IMR-90 (cell line): ENCODE measurements at regions of chr11 and their contacts with region 1.

Region 1: GRCh38 chr11:19595840-19596751 is 116.5 kb upstream of the NAV2 start:
- DNase-seq: peak; percentile 90
- ATAC-seq: peak; percentile 73
- H3K4me3 ChIP-seq: no peak overlapping the region
- H3K27ac ChIP-seq: peak overlapping the region; percentile 95
- H3K4me1 ChIP-seq: peaks cover 31% of the 10 kb centered on the region
- H3K27me3 ChIP-seq: no peaks in the 10 kb centered on the region
- CTCF ChIP-seq: no peak
- POLR2A ChIP-seq: no peak
- RAD21 ChIP-seq: no peak

Region 2: GRCh38 chr11:18958221-18958910 is 637.7 kb before region 1 on chr11:
- CTCF ChIA-PET with region 1: no interaction called
- POLR2A ChIA-PET with region 1: no interaction called
- dilution Hi-C with region 1: no loop called
- in situ Hi-C with region 1: no loop called
- intact Hi-C with region 1: no loop called
- DNase-seq: no peak
- ATAC-seq: no peak
- H3K4me3 ChIP-seq: no peak overlapping the region
- H3K27ac ChIP-seq: no peak overlapping the region
- H3K4me1 ChIP-seq: no peaks in the 10 kb centered on the region
- H3K27me3 ChIP-seq: no peaks in the 10 kb centered on the region
- CTCF ChIP-seq: no peak
- POLR2A ChIP-seq: no peak
- RAD21 ChIP-seq: no peak

Region 3: GRCh38 chr11:19553683-19554333 is 42.3 kb before region 1 on chr11:
- CTCF ChIA-PET with region 1: no interaction called
- POLR2A ChIA-PET with region 1: no interaction called
- dilution Hi-C with region 1: no loop called
- in situ Hi-C with region 1: no loop called
- intact Hi-C with region 1: no loop called
- DNase-seq: peak; percentile 62
- ATAC-seq: peak; percentile 79
- H3K4me3 ChIP-seq: no peak overlapping the region
- H3K27ac ChIP-seq: no peak overlapping the region
- H3K4me1 ChIP-seq: no peaks in the 10 kb centered on the region
- H3K27me3 ChIP-seq: peaks cover 32% of the 10 kb centered on the region
- CTCF ChIP-seq: peak; percentile 94
- POLR2A ChIP-seq: peak; percentile 40; the same call in 1 of the 2 replicates
- RAD21 ChIP-seq: peak; percentile 97

Region 4: DNA sequence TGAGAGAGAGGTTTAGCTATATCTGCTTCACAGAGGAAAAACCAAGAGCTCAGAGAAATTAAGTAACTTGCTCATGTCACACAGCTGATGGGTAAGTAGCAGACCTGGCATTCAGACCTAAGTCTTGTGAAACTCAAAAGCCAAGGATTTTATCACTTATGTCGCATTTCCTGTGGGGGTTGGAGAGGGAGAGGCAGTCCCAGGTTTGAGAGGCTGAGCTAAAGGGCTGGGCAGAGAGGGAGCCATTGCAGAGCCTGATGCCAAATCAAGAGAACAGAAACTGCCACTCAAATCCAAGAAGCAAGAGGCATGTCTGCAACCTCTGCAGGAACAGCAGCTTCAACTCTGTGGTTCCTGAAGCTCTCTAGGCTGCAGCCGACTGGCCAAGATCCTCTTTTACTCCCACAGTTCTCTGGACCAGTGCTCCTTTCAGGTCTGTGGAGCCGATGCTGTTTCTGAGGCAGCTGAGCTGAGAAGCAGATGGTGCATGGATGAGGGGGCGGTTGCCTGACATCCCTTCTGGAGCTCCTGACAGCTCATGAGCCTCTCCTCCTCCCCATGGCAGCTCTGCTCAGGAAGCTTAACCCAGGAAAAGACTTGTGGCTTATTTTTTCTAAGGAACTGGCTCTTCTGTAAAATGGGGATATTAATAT is 68.9 kb after region 1 on chr11:
- CTCF ChIA-PET with region 1: no interaction called
- POLR2A ChIA-PET with region 1: no interaction called
- dilution Hi-C with region 1: no loop called
- in situ Hi-C with region 1: no loop called
- intact Hi-C with region 1: loop called (anchors 5 kb)
- DNase-seq: peak; percentile 75
- ATAC-seq: peak; percentile 79
- H3K4me3 ChIP-seq: no peak overlapping the region
- H3K27ac ChIP-seq: no peak overlapping the region
- H3K4me1 ChIP-seq: peaks cover 14% of the 10 kb centered on the region
- H3K27me3 ChIP-seq: no peaks in the 10 kb centered on the region
- CTCF ChIP-seq: no peak
- POLR2A ChIP-seq: no peak
- RAD21 ChIP-seq: no peak